ENCODE measurements at regions of chr1 and their contacts with region 1.

Region 1: DNA sequence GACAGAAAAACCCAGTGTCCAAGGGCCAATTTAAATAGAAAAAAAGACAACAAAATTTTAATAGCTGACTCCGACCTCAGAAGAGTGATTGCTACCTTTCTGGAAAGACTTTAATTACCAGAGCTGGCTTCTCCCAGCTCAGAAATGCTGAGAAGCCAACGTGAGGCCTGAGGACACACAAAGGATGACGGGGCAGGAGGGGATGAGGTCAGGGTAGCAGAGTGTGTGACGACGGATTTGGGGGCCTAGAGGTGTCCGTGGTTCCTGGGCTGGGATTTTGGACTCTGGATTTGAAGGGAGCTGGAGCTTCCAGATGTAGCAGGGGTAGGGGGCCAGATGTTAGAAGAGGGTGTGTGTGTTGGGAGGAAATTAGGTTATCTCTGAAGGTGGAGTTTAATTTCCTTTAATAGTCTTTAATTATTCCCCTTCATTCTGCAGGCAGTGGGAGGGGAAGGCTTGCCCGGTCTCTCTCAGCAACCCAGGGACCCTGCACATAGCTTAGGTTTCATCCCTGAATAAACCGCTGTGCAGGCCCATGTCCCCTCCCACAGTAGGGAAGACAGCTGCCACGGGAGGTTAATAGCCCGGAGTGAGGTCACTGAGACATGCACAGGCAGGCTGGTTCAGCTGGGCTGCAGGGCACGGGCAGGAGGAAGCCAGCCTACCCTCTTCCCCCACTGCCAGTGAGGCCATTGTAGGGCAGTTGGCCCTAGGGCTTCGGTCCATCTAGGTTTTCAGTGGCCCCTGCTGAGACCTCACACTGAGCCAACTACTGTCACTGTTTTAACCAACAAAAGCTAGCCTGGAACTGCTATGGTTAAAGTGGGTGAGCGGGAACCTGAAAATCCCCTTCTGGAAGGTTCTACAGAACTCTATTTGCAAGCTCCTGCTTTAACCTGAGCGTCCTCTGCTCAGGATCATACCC is 3.8 kb upstream of the PADI3 start:
- DNase-seq: no peak
- H3K4me3 Mint-ChIP-seq: no peak overlapping the region
- H3K27ac Mint-ChIP-seq: no peak overlapping the region
- H3K4me1 Mint-ChIP-seq: no peaks in the 10 kb centered on the region
- H3K27me3 Mint-ChIP-seq: peaks cover 35% of the 10 kb centered on the region

Region 2: GRCh38 chr1:17125756-17126237 is 119.3 kb before region 1 on chr1:
- CTCF ChIA-PET with region 1: interaction called, 148 read pairs
- DNase-seq: peak; percentile 87
- H3K4me3 Mint-ChIP-seq: no peak overlapping the region
- H3K27ac Mint-ChIP-seq: no peak overlapping the region
- H3K4me1 Mint-ChIP-seq: no peaks in the 10 kb centered on the region
- H3K27me3 Mint-ChIP-seq: peaks cover 43% of the 10 kb centered on the region

Measured in activated naive CD4-positive, alpha-beta T cell treated with anti-CD3 and anti-CD28 coated beads, Interleukin-2, amount 10 ng/mL, durations not matched to agents 7 days and 5 days (primary cell).